HEK293 (cell line): ENCODE measurements at regions of chr9 and their contacts with region 1.

Region 1: DNA sequence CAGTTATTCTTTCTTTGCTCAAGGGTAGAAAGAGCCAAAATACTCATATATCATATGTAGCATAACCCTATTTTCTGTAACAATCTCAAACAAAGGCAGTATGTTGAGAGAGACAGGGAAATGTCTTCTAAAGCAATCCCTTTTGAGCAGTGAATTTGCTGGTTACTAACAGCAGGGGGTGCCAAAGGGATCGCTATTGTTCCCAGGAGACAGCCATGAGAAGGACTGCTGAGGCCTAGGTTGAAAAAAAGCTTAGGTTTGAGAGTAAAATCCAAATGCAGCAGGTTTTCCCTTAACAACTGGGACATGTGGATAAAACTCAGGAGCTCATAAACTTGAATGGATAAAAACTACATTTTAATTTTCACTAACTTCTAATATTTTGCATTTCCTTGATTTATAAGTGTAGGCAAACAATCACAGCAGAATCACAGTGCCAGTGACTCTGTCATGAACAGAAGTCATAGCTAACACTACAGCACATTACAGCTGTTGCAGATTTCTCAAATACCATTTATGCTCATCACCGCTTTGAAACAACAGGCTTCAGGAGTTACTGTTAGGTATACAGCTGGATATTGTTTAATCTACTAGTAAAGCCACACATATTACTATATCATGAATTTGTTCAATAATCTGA is 148.4 kb downstream of the MAPKAP1 start:
- H3K4me3 ChIP-seq: no peak overlapping the region
- H3K27ac ChIP-seq: no peak overlapping the region
- H3K4me1 ChIP-seq: 0 out of 2 replicates have a peak, but pooled peaks cover 2% of the 10 kb centered on the region
- CTCF ChIP-seq: no peak

Region 2: DNA sequence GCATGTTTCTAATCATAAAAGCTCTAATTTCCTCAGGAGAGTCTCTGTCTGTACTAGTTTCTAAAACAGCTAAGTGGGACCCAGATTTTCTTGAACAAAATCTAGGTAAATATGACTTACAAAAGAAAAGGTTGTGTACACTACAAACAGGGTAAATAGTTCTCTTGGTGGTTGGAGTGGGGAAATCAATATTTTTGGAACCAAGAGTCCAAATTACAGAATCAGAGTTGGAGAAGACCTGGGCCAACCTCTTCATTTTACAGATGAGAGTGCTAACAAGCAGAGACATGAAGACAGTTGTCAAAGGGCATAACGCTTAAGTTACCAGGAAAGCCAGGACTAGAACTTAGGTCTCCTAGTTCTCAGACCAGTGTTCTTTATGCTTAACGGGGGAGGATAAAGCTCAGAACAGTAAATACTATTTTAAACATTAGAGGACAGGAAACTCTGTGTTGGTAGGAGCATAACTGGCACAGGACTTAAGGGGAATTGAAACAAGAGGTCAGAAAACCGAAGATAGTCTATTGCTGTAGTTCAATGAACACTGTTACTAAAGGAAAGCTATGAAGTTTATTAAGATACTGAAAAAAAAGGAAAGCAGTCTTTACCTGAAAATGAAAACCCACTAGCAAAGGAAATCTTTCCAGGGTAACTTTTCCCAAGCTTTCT is 608.4 kb before region 1 on chr9:
- CTCF ChIA-PET with region 1: no interaction called
- POLR2A ChIA-PET with region 1: no interaction called
- H3K4me3 ChIP-seq: no peak overlapping the region
- H3K27ac ChIP-seq: no peak overlapping the region
- H3K4me1 ChIP-seq: no peaks in the 10 kb centered on the region
- CTCF ChIP-seq: no peak

Region 3: GRCh38 chr9:125407974-125408900 is 150.3 kb before region 1 on chr9:
- CTCF ChIA-PET with region 1: interaction called, 10 read pairs
- POLR2A ChIA-PET with region 1: no interaction called
- H3K4me3 ChIP-seq: peak overlapping the region; percentile 56
- H3K27ac ChIP-seq: peak overlapping the region; percentile 50; the same call in 1 of the 2 replicates
- H3K4me1 ChIP-seq: no peaks in the 10 kb centered on the region
- CTCF ChIP-seq: peak; percentile 90

Region 4: DNA sequence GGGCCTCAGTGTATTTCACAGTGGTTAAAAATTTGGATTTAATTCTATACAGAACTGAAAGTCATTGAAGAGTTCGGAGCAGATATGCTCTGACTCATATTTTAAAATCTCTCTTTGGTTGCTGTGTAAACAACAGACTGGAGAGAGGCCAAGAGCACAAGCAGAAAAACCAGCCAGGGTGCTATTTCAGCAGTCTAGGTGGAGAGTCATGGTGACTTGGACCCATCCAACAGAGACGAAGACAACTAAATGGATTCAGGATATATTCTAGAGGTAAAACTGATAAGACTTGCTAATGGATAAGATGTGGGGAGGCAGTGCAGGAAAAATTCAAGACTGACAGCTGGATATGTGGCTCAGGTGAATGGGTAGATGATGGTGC is 20.5 kb before region 1 on chr9:
- CTCF ChIA-PET with region 1: interaction called, 15 read pairs
- POLR2A ChIA-PET with region 1: no interaction called
- H3K4me3 ChIP-seq: no peak overlapping the region
- H3K27ac ChIP-seq: no peak overlapping the region
- H3K4me1 ChIP-seq: peaks cover 36% of the 10 kb centered on the region
- CTCF ChIP-seq: no peak

Region 5: GRCh38 chr9:125568621-125569020 is 10.0 kb after region 1 on chr9:
- CTCF ChIA-PET with region 1: interaction called, 18 read pairs
- POLR2A ChIA-PET with region 1: no interaction called
- H3K4me3 ChIP-seq: no peak overlapping the region
- H3K27ac ChIP-seq: no peak overlapping the region
- H3K4me1 ChIP-seq: no peaks in the 10 kb centered on the region
- CTCF ChIP-seq: no peak

Region 6: GRCh38 chr9:125574126-125574877 is 15.7 kb after region 1 on chr9:
- CTCF ChIA-PET with region 1: interaction called, 18 read pairs
- POLR2A ChIA-PET with region 1: no interaction called
- H3K4me3 ChIP-seq: no peak overlapping the region
- H3K27ac ChIP-seq: no peak overlapping the region
- H3K4me1 ChIP-seq: no peaks in the 10 kb centered on the region
- CTCF ChIP-seq: no peak

Region 7: DNA sequence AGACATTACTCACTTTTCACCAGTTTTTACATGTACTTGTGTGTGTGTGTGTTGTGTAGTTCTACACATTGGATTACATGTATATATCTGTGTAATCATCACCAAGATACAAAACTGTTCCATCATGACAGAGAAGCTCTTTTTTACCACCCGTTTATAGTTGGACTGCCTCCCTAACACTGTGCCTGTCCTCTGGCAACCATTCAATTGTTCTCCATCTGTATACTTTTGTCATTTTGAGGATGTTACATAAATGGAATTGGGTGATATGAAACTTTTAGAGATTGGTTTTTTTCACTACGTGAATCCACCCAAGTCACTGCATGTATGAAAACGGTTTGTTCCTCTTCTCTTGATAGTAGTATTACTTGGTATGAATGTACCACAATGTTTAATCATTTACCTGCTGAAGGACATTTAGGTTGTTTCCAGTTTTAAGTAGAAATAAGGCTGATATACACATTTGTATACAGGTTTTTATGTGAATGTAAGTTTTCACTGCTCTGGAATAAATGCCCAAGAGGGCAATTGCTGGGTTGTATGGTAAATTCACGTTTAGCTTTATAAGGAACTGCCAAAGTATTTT is 22.2 kb after region 1 on chr9:
- CTCF ChIA-PET with region 1: interaction called, 17 read pairs
- POLR2A ChIA-PET with region 1: no interaction called
- H3K4me3 ChIP-seq: no peak overlapping the region
- H3K27ac ChIP-seq: no peak overlapping the region
- H3K4me1 ChIP-seq: no peaks in the 10 kb centered on the region
- CTCF ChIP-seq: no peak

Region 8: GRCh38 chr9:125594230-125594623 is 35.7 kb after region 1 on chr9:
- CTCF ChIA-PET with region 1: interaction called, 10 read pairs
- POLR2A ChIA-PET with region 1: no interaction called
- H3K4me3 ChIP-seq: no peak overlapping the region
- H3K27ac ChIP-seq: no peak overlapping the region
- H3K4me1 ChIP-seq: no peaks in the 10 kb centered on the region
- CTCF ChIP-seq: no peak